GM13976 (cell line): ENCODE measurements at regions of chr7 and their contacts with region 1.

Region 1: DNA sequence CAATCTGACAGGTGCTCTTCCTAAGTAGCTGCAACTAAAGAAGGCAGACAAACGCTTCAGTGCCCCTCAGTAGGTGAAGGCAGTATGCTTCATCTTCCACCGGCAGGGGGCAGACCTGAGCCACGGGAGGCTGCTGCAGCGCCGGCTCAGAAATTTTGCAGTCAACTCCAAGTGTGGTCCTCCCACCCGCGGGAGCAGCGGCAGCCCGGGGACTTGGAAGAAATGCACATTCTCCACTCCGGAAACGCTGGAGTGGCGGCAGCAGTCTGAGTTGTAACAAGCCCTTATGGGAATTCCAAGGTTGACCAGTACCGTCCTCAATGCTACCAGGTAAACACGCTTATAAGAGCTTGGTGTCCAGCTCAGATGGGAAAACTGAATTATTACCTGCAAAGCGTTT is 3.4 kb downstream of the IGFBP3 start:
- DNase-seq: peak; percentile 85
- CTCF ChIP-seq: peak; percentile 93

Region 2: DNA sequence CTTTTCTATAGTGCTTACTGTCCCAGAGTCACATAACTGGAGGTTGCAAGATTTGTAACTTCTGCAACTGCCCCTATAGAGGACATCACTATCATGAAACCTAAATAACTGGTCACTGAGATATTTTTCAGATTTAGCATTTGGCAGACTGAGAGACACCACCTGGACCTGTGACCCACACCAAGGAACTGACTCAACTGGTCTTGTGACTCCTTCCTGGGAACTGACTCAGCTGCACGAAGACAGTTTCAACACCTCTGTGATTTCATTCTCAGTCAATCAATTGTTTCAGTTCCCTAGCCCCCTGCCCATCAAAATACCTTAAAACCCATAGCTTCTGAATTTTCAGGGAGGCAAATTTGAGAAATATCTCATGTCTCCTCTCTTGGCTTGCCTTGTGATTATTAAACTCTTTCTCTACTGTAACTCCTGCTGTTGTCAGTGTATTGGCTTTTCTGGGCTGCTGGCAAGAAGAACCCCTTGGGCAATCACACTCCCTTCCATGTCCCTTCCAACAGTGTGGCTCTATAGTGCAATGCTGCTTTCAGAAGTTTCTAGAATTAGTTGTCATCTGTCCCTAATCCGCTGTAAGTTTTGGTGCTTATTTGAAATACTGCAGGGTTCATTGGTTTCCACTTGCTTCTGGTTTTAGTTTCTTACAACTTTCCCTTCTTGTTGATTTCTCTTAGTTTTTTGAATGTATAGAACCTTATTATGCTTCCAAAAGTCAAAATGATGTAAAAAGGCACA is 471.3 kb before region 1 on chr7:
- in situ Hi-C with region 1: no loop called
- DNase-seq: no peak
- CTCF ChIP-seq: no peak

Region 3: DNA sequence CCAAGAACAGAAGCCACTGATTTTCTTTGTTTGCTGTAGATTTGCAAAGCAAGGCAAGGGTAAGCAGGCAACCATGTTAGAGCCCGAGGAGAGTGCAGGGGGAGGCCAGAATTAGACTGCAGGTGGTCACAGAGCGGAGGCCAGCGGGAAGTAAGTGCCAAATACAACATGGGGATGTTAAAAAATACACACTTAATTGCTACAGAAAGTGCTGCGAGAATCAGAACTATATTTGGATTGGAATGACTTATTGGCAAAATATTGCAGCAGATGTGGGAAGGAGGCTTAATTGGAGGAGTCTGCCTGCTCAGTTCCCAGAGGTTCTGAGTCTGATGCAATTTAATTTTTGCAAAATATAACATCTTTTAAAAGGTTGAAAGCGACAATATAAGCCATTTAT is 393.2 kb before region 1 on chr7:
- in situ Hi-C with region 1: no loop called
- DNase-seq: no peak
- CTCF ChIP-seq: no peak

Region 4: GRCh38 chr7:46454816-46455215 is 537.2 kb after region 1 on chr7:
- in situ Hi-C with region 1: no loop called
- DNase-seq: no peak
- CTCF ChIP-seq: no peak

Region 5: DNA sequence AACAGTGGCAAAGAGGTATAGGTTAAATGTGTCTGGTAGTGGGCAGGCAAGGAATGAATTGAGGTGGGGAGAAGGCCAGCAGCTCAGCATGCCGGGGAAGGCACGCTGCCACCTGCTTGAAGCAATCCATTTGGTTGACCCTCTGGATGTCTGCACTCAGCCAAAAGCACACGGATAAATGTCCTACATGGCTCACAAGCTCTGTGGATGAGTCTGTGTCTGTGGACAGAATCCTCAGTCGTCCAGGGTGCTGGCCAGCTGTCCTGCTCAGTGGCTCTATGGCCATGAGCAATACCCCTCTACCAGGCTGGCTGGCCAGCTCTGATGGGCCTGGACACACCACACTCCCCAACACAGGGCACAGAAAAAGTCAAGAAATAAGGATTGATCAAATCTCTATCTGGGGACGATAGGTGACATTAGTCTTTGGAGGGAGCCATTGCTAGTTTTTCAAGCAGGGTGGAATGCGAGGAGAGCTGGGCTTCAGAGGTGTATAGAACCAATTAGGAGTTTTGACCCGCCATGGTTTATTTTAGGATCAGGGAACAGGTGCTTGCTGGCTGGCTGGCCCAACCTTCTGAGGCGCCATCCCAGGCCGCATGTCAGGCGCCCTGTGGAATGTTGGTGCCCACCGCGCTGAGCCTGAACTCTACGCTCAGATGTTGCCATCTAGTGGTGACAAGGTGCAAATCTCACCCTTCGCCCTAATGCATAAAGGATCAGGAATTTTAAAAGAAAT is 1170.8 kb after region 1 on chr7:
- in situ Hi-C with region 1: loop called (anchors 25 kb)
- DNase-seq: peak; percentile 67
- CTCF ChIP-seq: peak; percentile 78

Region 6: GRCh38 chr7:47179812-47180515 is 1262.3 kb after region 1 on chr7:
- in situ Hi-C with region 1: loop called (anchors 25 kb)
- DNase-seq: peak; percentile 46
- CTCF ChIP-seq: peak; percentile 43